ENCODE measurements at regions of chr11 and their contacts with region 1.

Region 1: DNA sequence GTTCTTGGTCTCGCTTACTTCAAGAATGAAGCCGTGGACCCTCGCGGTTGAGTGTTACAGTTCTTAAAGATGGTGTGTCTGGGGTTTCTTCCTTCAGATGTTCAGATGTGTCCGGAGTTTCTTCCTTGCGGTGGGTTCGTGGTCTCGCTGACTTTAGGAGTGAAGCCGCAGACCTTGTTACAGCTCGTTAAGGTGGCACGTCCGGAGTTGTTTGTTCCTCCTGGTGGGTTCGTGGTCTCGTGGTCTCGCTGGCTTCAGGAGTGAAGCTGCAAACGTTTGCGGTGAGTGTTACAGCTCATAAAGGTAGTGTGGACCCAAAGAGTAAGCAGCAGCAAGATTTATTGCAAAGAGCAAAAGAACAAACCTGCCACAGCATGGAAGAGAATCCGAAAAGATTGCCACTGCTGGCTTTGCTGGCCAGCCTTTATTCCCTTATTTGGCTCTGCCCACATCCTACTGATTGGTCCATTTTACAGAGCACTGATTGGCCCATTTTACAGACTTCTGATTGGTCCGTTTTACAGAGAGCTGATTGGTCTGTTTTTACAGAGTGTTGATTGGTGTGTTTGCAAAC is 27.1 kb upstream of the NXPE2 start:
- DNase-seq: no peak
- ATAC-seq: no peak
- H3K4me3 ChIP-seq: no peak overlapping the region
- H3K27ac ChIP-seq: no peak overlapping the region
- H3K4me1 ChIP-seq: no peaks in the 10 kb centered on the region
- H3K27me3 ChIP-seq: peaks cover 0 to 2% of the 10 kb centered on the region in 2 experiments; a peak in 2 of 4 replicates
- CTCF ChIP-seq: no peak
- EP300 ChIP-seq: no peak
- POLR2A ChIP-seq: no peak
- RAD21 ChIP-seq: no peak

Region 2: DNA sequence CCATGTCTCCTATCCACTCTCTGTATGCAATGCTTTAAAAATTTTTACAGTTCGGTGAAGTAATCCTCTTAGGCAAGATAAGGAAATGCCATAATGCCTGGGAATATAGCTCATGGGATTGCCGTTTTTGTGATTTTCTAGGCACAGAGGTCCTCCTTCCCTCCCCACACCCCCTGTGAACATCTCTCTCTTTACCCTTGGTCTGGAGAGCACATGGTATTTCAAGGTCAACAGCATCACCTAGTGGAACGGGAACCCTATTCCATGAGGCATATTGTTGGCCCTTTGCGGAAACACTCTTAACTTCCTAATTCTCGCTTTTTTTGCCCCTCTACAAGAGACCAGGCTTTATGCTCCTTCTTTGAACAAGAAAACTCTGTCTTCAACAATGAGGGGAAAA is 64.4 kb before region 1 on chr11:
- CTCF ChIA-PET with region 1: no interaction called
- POLR2A ChIA-PET with region 1: no interaction called
- RAD21 ChIA-PET with region 1: no interaction called
- SMC1A ChIA-PET with region 1: no interaction called
- in situ Hi-C with region 1: loop called (anchors 10 kb)
- intact Hi-C with region 1: no loop called
- DNase-seq: no peak
- ATAC-seq: no peak
- H3K4me3 ChIP-seq: no peak overlapping the region
- H3K27ac ChIP-seq: no peak overlapping the region
- H3K4me1 ChIP-seq: no peaks in the 10 kb centered on the region
- H3K27me3 ChIP-seq: peaks cover 0 to 15% of the 10 kb centered on the region in 2 experiments; a peak in 3 of 4 replicates
- CTCF ChIP-seq: no peak
- EP300 ChIP-seq: no peak
- POLR2A ChIP-seq: no peak
- RAD21 ChIP-seq: no peak